ENCODE measurements at regions of chr7 and their contacts with region 1.

Region 1: DNA sequence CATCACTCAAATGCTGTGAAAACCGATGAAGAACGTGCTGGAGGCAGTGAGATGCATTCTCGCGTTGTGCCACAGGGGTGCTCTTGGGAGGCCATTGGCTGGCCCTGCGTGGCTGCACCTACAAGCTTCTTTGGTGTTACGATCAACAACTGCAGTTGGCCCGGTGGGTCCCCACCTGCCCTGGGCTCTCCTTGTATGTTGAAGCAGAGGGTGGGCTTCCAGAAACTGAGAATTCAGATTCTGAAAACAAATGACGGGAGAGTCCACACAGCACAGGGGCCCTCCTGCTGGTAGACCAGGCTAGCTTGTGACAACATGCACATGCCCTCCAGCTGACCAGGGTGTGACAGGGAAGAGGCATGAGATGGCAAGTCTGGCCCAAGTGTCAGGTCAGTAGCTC is 23.7 kb upstream of the DDC start:
- DNase-seq: no peak
- ATAC-seq: no peak
- H3K4me3 ChIP-seq: no peak overlapping the region
- H3K27ac ChIP-seq: no peak overlapping the region
- H3K4me1 ChIP-seq: peaks cover 0 to 6% (median 0%) of the 10 kb centered on the region in 9 donors
- H3K27me3 ChIP-seq: no peaks in the 10 kb centered on the region
- CTCF ChIP-seq: peak in 2 of 9 donors; percentile 10 to 16

Region 2: DNA sequence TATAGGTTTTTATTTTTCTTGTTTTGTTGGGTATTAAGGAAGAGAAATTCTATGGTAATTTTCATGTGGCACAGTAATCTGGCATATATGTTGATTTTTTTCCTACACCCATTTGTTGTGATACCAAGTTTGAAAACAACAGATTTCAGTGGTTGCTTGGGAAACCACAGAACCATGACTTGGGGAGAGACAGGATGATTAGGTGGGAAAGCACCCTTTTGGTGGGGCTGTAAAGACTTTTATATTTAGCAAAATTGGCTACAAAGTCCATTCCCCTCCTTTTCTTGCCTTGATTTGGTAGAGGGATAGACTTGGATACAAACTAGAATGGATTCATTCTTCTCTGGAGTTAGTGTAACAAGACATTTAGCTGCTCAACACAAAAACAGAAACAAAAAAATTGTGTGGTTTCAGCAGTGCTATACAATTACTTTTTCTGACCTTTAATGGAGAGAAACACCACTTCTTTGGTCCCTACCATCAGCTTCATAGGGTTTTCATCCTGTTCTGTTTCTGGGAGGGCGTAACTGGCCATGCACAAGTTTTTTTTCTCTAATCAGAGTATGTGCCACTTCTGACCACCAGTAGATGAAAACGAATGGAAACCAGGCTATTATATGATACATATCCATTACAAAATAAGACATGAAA is 191.5 kb before region 1 on chr7:
- intact Hi-C with region 1: no loop called
- DNase-seq: no peak
- ATAC-seq: no peak
- H3K4me3 ChIP-seq: no peak overlapping the region
- H3K27ac ChIP-seq: no peak overlapping the region
- H3K4me1 ChIP-seq: peaks cover 0 to 38% (median 0%) of the 10 kb centered on the region in 9 donors
- H3K27me3 ChIP-seq: peaks cover 0 to 76% (median 45%) of the 10 kb centered on the region in 7 donors
- CTCF ChIP-seq: no peak

Region 3: GRCh38 chr7:50502001-50502684 is 86.8 kb before region 1 on chr7:
- intact Hi-C with region 1: loop called in 1 of 10 experiments (anchors 10 kb)
- DNase-seq: peak; percentile 65 to 71
- ATAC-seq: peak; percentile 82 to 97 (median 94)
- H3K4me3 ChIP-seq: no peak overlapping the region
- H3K27ac ChIP-seq: peak overlapping the region in 7 of 10 donors; percentile 24 to 58 (median 41)
- H3K4me1 ChIP-seq: peaks cover 5 to 28% (median 19%) of the 10 kb centered on the region in 9 donors
- H3K27me3 ChIP-seq: no peaks in the 10 kb centered on the region
- CTCF ChIP-seq: no peak

Measured in heart right ventricle (tissue), 16 donors.